HEK293 (cell line): ENCODE measurements at regions of chr1 and their contacts with region 1.

Region 1: GRCh38 chr1:47192458-47193384 is 2.9 kb upstream of the PDZK1IP1 start:
- H3K4me3 ChIP-seq: no peak overlapping the region
- H3K27ac ChIP-seq: no peak overlapping the region
- H3K4me1 ChIP-seq: no peaks in the 10 kb centered on the region
- CTCF ChIP-seq: peak; percentile 87

Region 2: GRCh38 chr1:47179017-47179987 is 13.4 kb before region 1 on chr1:
- CTCF ChIA-PET with region 1: interaction called, 78 read pairs
- POLR2A ChIA-PET with region 1: interaction called, 4 read pairs
- H3K4me3 ChIP-seq: peak overlapping the region; percentile 38
- H3K27ac ChIP-seq: no peak overlapping the region
- H3K4me1 ChIP-seq: no peaks in the 10 kb centered on the region
- CTCF ChIP-seq: peak; percentile 91

Region 3: GRCh38 chr1:47207811-47208373 is 15.2 kb after region 1 on chr1:
- CTCF ChIA-PET with region 1: interaction called, 16 read pairs
- POLR2A ChIA-PET with region 1: no interaction called
- H3K4me3 ChIP-seq: no peak overlapping the region
- H3K27ac ChIP-seq: no peak overlapping the region
- H3K4me1 ChIP-seq: no peaks in the 10 kb centered on the region
- CTCF ChIP-seq: no peak

Region 4: DNA sequence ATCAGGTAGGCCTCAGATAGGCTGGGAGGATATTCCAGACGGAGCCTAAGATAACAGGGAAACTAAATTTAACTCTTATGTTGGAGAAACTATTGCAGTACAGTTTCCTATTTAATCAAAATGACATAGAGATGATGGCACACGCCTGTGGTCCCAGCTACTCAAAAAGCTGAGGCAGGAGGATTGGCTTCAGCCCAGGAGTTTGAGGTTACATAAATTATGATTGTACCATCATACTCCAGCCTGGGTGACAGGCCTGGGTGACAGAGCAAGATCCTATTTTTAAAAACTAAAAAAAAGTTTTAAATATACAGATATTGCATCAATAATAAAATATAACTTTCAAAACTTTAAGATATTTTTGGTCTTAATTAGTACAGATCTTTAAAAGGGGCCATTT is 64.5 kb after region 1 on chr1:
- CTCF ChIA-PET with region 1: interaction called, 136 read pairs
- POLR2A ChIA-PET with region 1: no interaction called
- H3K4me3 ChIP-seq: no peak overlapping the region
- H3K27ac ChIP-seq: no peak overlapping the region
- H3K4me1 ChIP-seq: no peaks in the 10 kb centered on the region
- CTCF ChIP-seq: no peak